Right ventricle myocardium inferior (tissue), 1 donor: ENCODE measurements at regions of chr2 and their contacts with region 1.

Region 1: GRCh38 chr2:2057125-2057721 is 273.9 kb downstream of the MYT1L start:
- DNase-seq: peak; percentile 76
- ATAC-seq: peak; percentile 79

Region 2: DNA sequence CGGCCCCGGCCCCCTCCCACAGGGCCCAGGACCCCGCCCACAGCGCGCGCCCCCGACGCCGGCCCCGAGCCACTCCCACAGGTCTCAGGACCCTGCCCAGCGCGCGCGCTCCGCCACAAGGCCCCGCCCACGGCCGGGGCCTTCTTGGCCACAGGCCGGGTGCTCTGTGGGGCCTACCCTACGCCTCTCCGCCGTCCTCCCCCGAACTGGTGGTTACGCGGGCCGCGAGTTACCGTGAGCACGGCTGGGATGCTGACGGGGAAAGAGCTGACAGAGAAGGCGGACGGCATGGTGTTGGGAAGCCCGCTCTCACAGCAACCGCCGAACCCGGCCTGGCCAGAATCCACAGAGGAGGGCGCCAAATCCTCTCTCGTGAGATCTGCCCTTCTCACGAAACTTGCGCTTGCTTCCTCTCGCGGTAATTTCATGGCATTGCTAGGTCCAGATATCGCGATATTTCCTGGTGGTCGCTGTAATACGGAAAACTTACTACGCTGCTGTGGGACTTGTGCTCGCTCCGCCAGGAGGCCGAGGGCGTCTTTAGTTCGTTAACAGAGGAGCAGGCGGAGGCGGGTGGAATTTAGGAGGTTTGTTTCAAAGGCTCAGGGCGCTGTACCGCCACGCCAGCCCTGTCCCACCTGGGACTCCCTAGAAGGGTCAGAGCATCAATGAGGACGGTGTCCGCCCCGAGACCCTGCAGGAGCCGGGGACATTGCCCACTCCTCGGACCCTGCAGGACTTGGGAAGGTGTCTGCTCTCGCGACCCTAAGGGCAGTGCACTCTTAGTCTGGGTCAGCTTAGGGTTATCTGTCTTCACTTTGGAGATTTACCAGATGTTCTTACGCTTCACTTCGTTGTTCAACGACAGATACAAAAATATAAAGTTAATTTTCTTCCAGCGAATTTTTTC is 1379.9 kb before region 1 on chr2 and contains the start of gene TMEM18:
- intact Hi-C with region 1: loop called (anchors 10 kb)
- DNase-seq: no peak
- ATAC-seq: peak; percentile 96
- total RNA-seq, gene TMEM18: 10.6 TPM

Region 3: GRCh38 chr2:2012505-2012904 is 44.7 kb before region 1 on chr2:
- intact Hi-C with region 1: loop called (anchors 2 kb)
- DNase-seq: no peak
- ATAC-seq: no peak

Region 4: DNA sequence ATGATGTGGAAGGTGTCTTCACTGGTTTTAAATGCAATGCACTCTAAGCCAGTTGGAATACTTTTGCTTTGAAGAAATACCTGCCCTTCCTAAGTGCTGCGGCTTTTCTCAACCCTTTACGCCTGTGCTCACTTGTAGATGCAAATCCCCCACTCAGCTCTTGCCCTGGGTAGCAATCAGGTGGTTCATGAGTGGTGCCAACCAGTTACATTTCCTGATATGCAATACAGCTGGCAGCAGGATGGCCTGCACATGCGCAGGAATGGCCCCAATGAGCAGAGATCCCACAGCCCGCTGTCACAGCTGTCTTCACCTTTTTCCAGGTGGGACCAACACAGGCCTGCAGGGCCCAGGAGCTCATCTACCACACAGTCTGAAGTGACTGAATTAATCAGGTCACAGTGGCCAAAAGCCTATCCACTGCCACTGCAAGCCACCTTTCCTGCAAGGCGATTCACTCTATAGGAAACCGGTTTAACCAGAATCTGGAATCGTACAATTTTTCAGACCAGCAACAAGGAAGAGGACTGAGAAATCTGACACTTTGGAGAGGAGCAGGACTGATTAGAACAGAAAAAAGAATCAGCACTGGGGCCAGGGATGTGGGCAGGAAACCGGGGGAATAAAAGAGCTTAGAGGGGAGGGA is 26.0 kb after region 1 on chr2:
- intact Hi-C with region 1: no loop called
- DNase-seq: no peak
- ATAC-seq: no peak

Region 5: GRCh38 chr2:2121887-2122286 is 64.7 kb after region 1 on chr2:
- intact Hi-C with region 1: no loop called
- DNase-seq: no peak
- ATAC-seq: no peak